ENCODE measurements at regions of chr5 and their contacts with region 1.

Region 1: DNA sequence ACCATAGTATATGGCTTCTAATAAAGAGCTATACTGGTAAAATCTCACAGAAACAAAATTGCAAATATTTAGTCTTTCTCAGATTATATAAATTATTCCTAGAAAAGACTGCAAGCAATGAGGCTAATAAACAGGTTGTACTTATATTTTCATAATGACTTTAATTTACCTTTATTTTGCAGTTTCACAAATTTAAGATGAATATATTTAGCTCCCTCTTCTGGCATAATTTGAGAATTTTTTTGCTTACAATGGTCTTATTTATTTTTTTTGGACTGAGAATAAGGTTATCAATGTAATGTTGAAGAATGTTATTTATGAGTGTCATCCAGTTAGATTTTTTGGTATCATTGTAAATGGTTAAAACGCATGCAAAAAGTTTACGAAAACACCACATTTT is 56.7 kb downstream of the PIK3R1 start:
- DNase-seq: no peak
- H3K4me3 Mint-ChIP-seq: no peak overlapping the region
- H3K27ac Mint-ChIP-seq: no peak overlapping the region
- H3K4me1 Mint-ChIP-seq: peaks cover 81% of the 10 kb centered on the region
- H3K27me3 Mint-ChIP-seq: no peaks in the 10 kb centered on the region

Region 2: DNA sequence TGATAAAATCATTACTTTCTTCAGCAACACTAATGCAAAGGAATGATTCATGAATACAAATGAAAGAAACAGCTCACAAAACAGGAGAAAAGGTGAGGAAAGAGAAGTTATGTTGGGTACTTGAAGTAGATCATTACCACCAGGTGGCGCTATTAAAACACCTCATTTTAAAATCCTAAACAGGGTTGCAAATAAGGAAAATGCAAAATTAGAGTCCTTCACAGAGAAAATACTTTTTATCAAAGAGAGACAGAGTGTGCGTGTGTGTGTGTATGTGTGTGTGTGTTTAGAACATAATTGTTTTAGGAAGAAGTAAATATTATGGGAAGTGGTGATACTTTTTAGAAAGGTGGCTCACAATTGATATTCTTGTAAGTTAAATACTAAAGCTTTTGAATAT is 1026.2 kb before region 1 on chr5:
- intact Hi-C with region 1: loop called (anchors 5 kb)
- DNase-seq: no peak
- H3K4me3 Mint-ChIP-seq: no peak overlapping the region
- H3K27ac Mint-ChIP-seq: no peak overlapping the region
- H3K4me1 Mint-ChIP-seq: no peaks in the 10 kb centered on the region
- H3K27me3 Mint-ChIP-seq: no peaks in the 10 kb centered on the region

Region 3: GRCh38 chr5:68215208-68215897 is 56.9 kb before region 1 on chr5 and contains the start of gene PIK3R1:
- intact Hi-C with region 1: loop called (anchors 1 kb)
- DNase-seq: peak; percentile 88
- H3K4me3 Mint-ChIP-seq: peak within 1 kb of the TSS; percentile 91
- H3K27ac Mint-ChIP-seq: peak within 1 kb of the TSS; percentile 93
- H3K4me1 Mint-ChIP-seq: peaks cover 37% of the 10 kb centered on the region
- H3K27me3 Mint-ChIP-seq: no peaks in the 10 kb centered on the region
- total RNA-seq, gene PIK3R1: 43.3 and 46.2 TPM in 2 replicates

Region 4: DNA sequence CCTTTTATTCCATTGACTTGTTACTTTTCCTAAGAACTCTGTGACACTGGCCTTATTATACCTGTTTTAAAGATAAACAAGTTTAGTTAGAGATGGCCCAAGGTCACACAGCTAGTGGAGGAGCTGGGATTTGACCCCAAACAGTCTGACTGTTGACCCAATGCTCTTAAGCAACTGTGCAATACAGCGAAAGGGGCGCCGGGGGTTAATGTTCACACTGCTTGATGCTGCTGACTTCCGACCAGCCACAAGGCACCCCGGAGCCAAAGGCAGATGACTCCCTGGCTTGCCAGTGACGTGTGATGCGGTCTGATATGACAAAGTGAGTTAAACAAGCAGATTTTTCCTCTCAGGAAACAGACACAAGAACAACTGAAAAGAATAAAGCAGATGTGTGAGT is 32.8 kb before region 1 on chr5:
- intact Hi-C with region 1: loop called (anchors 2 kb)
- DNase-seq: peak; percentile 69
- H3K4me3 Mint-ChIP-seq: peak overlapping the region; percentile 60
- H3K27ac Mint-ChIP-seq: peak overlapping the region; percentile 93
- H3K4me1 Mint-ChIP-seq: peaks cover 68% of the 10 kb centered on the region
- H3K27me3 Mint-ChIP-seq: no peaks in the 10 kb centered on the region

Region 5: DNA sequence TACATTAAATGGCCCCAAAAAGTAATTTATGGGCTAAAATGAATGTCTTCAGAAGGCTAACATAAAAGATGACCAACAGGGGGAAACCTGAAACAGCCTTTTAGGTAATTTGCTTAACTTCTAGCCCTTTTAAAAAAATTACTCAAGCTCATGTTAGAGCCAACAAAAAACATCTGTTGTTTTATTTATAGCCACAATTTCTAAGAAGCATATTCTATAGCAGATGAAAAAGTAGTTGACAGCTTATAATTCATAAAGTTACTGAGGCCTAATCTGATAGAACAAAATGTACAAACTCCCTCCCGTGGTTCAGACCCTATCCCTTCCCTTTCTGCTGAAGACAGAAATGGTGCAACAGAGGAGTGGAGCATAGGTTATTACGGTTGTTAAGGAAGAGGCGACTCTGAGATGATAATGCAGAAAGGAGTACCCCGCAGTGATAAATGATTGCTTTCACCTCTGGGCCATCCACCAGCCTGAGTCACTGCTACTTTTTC is 10.7 kb before region 1 on chr5:
- intact Hi-C with region 1: loop called (anchors 2 kb)
- DNase-seq: no peak
- H3K4me3 Mint-ChIP-seq: no peak overlapping the region
- H3K27ac Mint-ChIP-seq: no peak overlapping the region
- H3K4me1 Mint-ChIP-seq: peaks cover 67% of the 10 kb centered on the region
- H3K27me3 Mint-ChIP-seq: no peaks in the 10 kb centered on the region